MCF 10A (cell line): ENCODE measurements at regions of chr12 and their contacts with region 1.

Region 1: GRCh38 chr12:108457006-108457733 is 57.9 kb upstream of the FICD start:
- DNase-seq: peak; percentile 76
- H3K4me3 Mint-ChIP-seq: no peak overlapping the region
- H3K27ac Mint-ChIP-seq: no peak overlapping the region
- H3K4me1 Mint-ChIP-seq: no peaks in the 10 kb centered on the region
- H3K27me3 Mint-ChIP-seq: peaks cover 37% of the 10 kb centered on the region
- CTCF ChIP-seq: peak; percentile 60

Region 2: GRCh38 chr12:107917912-107918800 is 539.0 kb before region 1 on chr12:
- CTCF ChIA-PET with region 1: interaction called, 7 read pairs
- POLR2A ChIA-PET with region 1: no interaction called
- intact Hi-C with region 1: loop called (anchors 1 kb)
- DNase-seq: peak; percentile 46
- H3K4me3 Mint-ChIP-seq: no peak overlapping the region
- H3K27ac Mint-ChIP-seq: no peak overlapping the region
- H3K4me1 Mint-ChIP-seq: no peaks in the 10 kb centered on the region
- H3K27me3 Mint-ChIP-seq: peaks cover 19% of the 10 kb centered on the region
- CTCF ChIP-seq: peak; percentile 61

Region 3: DNA sequence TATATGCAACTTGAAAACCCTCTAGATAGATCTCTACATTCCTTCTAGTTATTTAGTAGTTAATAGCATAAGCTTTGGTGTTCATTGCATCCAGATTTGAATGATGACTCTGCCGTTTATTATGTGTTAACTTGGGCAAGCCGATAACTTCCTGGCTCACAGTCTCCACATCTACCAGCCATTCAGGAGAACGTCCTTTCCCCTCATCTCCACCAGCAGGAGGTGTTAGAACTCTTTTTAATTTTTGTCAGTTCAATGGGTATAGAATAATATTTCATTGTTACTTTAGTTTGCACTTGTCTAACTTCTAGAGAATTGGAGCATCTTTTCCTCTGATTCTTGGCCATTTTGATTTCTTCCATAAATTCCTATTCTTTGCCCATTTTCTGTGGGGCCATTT is 358.1 kb before region 1 on chr12:
- CTCF ChIA-PET with region 1: interaction called, 7 read pairs
- POLR2A ChIA-PET with region 1: interaction called, 3 read pairs
- intact Hi-C with region 1: loop called (anchors 1 kb)
- DNase-seq: peak; percentile 18
- H3K4me3 Mint-ChIP-seq: no peak overlapping the region
- H3K27ac Mint-ChIP-seq: no peak overlapping the region
- H3K4me1 Mint-ChIP-seq: no peaks in the 10 kb centered on the region
- H3K27me3 Mint-ChIP-seq: peaks cover 7% of the 10 kb centered on the region
- CTCF ChIP-seq: no peak

Region 4: DNA sequence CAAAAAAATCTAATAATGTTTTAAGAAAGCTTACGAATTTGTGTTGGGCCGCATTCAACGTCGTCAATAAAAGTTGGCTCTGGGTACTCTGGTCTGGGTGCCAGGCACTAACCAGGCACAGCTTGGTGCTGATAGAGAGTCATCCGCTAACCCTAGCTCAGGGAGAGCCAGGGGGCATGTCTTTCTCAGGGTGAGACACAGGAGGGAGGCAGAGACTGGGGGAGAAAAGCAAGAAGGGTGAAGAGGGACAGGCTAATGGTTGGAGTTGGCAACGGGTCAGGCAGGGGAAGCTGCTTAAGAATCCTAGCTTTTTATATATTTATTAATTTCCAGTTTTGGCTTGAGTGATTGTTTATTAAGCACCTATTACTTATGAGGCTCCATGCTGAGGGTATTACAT is 223.0 kb before region 1 on chr12:
- CTCF ChIA-PET with region 1: interaction called, 4 read pairs
- POLR2A ChIA-PET with region 1: no interaction called
- intact Hi-C with region 1: loop called (anchors 2 kb)
- DNase-seq: peak; percentile 14
- H3K4me3 Mint-ChIP-seq: no peak overlapping the region
- H3K27ac Mint-ChIP-seq: no peak overlapping the region
- H3K4me1 Mint-ChIP-seq: no peaks in the 10 kb centered on the region
- H3K27me3 Mint-ChIP-seq: peaks cover 36% of the 10 kb centered on the region
- CTCF ChIP-seq: no peak

Region 5: DNA sequence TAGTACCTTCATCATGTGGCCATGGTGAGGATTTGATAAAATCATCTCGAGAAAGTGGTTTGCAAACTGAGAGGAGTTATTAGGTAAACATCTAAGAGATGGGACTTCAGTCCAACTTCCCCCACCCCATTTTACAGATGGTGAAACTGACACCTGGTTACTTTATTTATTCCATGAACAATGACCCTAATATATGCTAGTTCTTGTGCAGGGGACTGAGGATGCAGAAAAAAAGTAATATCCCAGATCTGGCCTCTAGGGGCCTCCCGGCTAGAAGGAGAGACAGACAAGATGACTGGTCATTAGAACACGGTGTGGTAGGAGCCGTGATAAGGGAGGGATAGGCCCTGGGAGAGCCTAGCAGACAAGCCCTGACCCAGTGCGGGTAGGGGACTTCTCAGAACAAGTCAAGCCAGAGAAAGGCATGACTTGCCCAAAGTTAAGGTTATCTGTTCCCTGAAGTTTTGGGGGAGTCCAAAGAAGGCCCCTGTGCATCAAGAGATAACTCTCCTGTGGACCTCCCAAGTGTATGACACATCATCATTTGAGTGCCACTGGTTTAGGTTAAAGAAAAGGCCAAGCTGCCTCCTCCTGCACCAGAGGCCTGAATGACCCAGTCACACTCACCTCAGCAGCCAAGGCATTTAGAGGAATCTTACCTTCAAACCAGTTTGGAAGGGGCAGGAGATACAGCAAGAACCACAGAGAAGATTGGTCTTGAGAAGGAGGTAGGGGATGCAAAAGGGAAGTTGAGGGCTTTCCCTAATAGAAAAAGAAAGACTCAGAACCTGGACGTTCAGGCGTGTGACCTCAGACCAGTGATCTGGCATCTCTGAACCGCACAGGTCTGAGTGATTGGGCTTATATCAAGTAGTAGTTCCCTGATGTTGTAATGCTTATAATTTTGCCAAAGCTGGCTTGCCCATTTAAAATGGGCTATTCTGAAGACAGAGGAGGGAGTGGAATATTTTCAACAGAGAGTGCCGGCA is 119.6 kb before region 1 on chr12:
- CTCF ChIA-PET with region 1: interaction called, 3 read pairs
- POLR2A ChIA-PET with region 1: no interaction called
- intact Hi-C with region 1: loop called (anchors 1 kb)
- DNase-seq: peak; percentile 55
- H3K4me3 Mint-ChIP-seq: no peak overlapping the region
- H3K27ac Mint-ChIP-seq: no peak overlapping the region
- H3K4me1 Mint-ChIP-seq: peaks cover 18% of the 10 kb centered on the region
- H3K27me3 Mint-ChIP-seq: no peaks in the 10 kb centered on the region
- CTCF ChIP-seq: peak; percentile 51